OCI-LY7 (cell line): ENCODE measurements at regions of chr9 and their contacts with region 1.

Region 1: DNA sequence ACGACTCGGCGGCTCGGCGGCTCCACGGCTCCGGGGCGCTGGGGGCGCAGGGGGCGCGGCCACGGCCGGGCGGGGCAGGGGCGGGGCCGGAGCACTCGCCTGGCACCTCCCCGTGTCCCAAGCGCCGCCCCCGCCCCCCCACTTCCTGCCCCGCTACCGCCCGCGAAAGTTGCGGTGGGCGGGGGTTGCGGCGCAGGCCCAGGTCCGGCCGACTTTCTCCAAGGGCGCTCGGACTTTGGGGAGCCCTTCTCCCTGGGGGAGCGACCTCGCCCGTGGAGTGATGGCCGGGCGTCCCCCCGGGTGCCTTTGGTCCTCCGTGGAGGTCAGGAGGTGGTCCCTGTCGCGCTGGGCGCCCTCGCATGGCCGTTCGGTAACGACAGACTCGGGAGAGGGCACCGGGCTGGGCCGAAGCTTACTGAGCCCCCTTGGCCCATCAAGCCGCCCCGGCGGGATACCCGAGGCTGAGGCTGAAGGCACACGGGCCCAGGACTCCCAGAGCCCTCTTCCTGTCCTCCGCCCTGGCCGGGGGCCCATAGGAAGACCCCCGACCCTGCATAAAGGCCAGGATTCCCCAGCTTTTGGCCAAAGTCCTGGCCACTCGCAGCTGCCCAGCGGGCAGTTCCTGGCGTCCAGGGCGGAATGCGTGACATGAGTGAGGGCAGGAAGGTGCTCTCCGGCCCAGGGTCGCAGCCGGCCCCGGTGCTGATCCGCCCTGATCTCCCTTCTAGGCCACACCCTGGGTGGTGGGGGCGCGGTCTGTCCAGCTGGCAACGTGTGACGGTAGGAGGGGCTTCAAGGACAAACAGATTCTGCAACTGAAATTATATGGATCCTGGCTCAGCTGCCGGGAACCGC is 883 bp upstream of the VAV2 start:
- DNase-seq: peak; percentile 78
- H3K4me3 ChIP-seq: peak overlapping the region; percentile 88
- H3K27ac ChIP-seq: peak overlapping the region; percentile 16
- H3K4me1 ChIP-seq: peaks cover 25% of the 10 kb centered on the region
- CTCF ChIP-seq: peak; percentile 76

Region 2: DNA sequence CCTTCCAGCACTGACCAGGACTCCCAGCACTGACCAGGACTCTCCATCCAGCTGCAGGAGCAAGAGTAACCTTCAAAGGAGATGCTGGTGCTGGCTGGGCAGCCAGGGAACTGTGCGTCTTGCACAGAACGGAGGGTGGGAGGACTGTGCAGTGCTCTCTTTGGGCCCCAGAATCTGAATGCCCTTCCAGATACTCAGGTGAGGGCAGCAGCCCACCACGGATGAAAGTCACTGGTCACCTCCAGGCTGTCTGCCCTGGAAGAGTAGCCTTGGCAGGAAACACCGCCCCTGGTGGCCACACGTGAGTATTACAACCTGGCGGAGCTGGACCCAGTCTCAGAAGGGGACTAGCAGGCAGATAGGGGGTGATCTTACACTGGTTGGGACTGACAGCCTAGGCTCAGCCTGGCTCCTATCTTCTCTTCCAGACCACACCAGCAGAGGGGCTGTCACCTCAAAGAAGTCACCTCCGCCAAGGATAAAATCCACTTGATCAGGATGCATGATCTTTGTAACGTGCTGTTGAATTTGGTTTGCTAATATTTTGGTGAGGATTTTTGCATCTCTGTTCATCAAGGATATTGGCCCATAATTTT is 250.1 kb before region 1 on chr9:
- CTCF ChIA-PET with region 1: interaction called, 3 read pairs
- POLR2A ChIA-PET with region 1: no interaction called
- intact Hi-C with region 1: loop called (anchors 2 kb)
- DNase-seq: peak; percentile 84
- H3K4me3 ChIP-seq: no peak overlapping the region
- H3K27ac ChIP-seq: no peak overlapping the region
- H3K4me1 ChIP-seq: peaks cover 6% of the 10 kb centered on the region
- CTCF ChIP-seq: peak; percentile 98

Region 3: DNA sequence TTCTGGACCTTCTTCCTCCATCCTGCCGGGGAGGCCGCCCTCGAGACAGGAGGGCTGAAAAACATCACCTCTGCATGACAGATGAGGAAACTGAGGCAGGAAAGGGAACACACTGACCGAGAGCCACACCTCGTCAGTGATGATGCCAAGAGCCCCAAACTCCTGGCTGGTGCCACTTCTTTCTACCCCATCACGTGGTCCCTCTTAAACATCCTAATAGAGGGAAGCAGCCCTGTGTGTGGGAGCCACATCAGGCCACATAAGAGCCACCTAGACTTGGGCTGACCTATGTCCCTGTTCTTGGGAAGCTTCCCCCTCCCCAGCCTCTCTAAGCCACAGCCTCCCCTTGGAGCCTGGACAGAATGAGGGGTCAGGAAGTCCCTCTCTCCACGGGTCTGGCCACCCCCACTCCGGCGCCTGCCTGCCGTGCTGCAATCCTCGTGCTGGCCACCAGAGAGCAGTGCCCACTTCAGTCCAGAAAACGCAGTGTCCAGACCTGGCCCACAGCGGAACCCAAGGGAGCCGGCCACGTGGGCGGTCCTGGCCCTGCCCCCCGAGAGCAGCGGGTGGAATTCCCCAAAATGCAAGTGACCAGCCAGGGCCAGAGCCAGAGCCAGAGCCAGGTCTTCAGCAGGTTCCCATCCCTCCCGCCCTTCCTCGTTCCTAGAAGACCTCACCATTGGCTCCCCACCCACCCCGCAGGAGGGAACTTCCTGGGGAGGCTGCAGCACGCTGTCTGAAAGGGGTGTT is 200.1 kb before region 1 on chr9:
- CTCF ChIA-PET with region 1: no interaction called
- POLR2A ChIA-PET with region 1: no interaction called
- intact Hi-C with region 1: loop called (anchors 1 kb)
- DNase-seq: peak; percentile 58
- H3K4me3 ChIP-seq: no peak overlapping the region
- H3K27ac ChIP-seq: no peak overlapping the region
- H3K4me1 ChIP-seq: peaks cover 12% of the 10 kb centered on the region
- CTCF ChIP-seq: peak; percentile 83

Region 4: GRCh38 chr9:133897648-133898047 is 95.4 kb before region 1 on chr9:
- CTCF ChIA-PET with region 1: no interaction called
- POLR2A ChIA-PET with region 1: no interaction called
- intact Hi-C with region 1: loop called (anchors 5 kb)
- DNase-seq: no peak
- H3K4me3 ChIP-seq: no peak overlapping the region
- H3K27ac ChIP-seq: no peak overlapping the region
- H3K4me1 ChIP-seq: peaks cover 16% of the 10 kb centered on the region
- CTCF ChIP-seq: no peak

Region 5: GRCh38 chr9:133955821-133956411 is 37.1 kb before region 1 on chr9:
- CTCF ChIA-PET with region 1: no interaction called
- POLR2A ChIA-PET with region 1: interaction called, 3 read pairs
- intact Hi-C with region 1: loop called (anchors 1 kb)
- DNase-seq: peak; percentile 90
- H3K4me3 ChIP-seq: peak overlapping the region; percentile 64
- H3K27ac ChIP-seq: peak overlapping the region; percentile 93
- H3K4me1 ChIP-seq: peaks cover 69% of the 10 kb centered on the region
- CTCF ChIP-seq: 0 out of 2 replicates have a peak, but pooled peaks have one; percentile 16

Region 6: GRCh38 chr9:134111064-134111463 is 118.1 kb after region 1 on chr9:
- CTCF ChIA-PET with region 1: no interaction called
- POLR2A ChIA-PET with region 1: no interaction called
- intact Hi-C with region 1: no loop called
- DNase-seq: no peak
- H3K4me3 ChIP-seq: no peak overlapping the region
- H3K27ac ChIP-seq: no peak overlapping the region
- H3K4me1 ChIP-seq: no peaks in the 10 kb centered on the region
- CTCF ChIP-seq: no peak

Region 7: GRCh38 chr9:134243778-134244467 is 250.9 kb after region 1 on chr9:
- CTCF ChIA-PET with region 1: no interaction called
- POLR2A ChIA-PET with region 1: no interaction called
- intact Hi-C with region 1: no loop called
- DNase-seq: peak; percentile 86
- H3K4me3 ChIP-seq: peak overlapping the region; percentile 26
- H3K27ac ChIP-seq: peak overlapping the region; percentile 50
- H3K4me1 ChIP-seq: peaks cover 26% of the 10 kb centered on the region
- CTCF ChIP-seq: no peak